Tibial artery (tissue), 4 donors: ENCODE measurements at regions of chr3 and their contacts with region 1.

Region 1: DNA sequence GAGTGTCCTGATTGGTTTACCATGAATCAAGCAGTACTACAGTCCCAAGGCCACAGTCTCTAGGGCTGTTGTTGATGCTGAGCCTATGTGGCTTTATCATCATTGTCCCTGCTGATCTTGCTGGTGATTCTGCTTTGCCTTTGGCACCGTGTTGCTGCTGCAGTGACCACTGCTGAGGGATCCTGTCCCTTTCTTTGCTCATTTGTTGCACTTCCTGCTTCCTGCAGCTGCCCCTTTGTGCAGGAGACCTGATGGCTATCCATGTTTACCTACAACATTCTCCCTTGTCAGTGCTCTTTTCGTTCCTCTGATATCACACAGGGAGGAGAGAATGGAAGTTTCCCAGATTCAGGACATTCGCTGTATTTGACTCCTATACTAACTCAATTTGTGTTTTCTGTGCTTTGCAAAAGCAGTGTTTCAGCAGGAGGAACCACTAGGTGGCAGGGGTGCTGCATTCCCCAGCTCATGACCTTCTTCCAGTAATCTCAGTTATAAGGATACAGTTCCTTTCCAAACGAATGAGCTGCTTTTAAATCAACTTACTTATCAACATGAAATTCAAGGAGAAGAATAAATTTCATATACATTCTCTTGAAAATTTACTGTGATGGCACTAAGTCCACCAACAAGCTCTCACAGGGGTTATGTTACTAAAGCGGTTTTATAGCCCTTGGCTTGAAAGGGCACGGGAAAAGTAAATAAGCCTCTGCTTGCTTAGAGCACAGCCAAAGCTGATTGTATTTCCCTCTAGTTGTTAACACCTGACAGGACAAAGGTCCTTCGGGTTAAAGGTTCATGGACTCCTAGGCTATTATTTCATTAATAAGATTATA is 9.7 kb upstream of the THUMPD3 start:
- DNase-seq: peak; percentile 57 to 73
- H3K4me3 ChIP-seq: no peak overlapping the region
- H3K27ac ChIP-seq: no peak overlapping the region
- H3K4me1 ChIP-seq: peaks cover 0 to 12% (median 0%) of the 10 kb centered on the region in 4 donors
- H3K27me3 ChIP-seq: no peaks in the 10 kb centered on the region
- CTCF ChIP-seq: peak; percentile 71 to 84

Region 2: DNA sequence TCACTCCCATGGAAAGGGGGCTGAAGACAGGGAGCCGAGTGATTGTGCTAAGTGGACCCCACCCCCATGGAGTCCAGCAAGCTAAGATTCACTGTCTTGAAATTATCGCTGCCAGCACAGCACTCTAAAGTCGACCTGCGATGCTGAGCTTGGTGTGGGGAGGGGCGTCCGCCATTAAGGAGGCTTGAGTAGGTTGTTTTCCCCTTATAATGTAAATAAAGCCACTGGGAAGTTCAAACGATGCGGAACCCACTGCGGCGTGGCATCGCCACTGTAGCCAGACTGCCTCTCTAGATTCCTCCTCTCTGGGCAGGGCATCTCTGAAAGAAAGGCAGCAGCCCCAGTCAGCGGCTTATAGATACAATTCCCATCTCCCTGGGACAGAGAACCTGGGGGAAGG is 92.8 kb before region 1 on chr3:
- intact Hi-C with region 1: no loop called
- DNase-seq: no peak
- H3K4me3 ChIP-seq: no peak overlapping the region
- H3K27ac ChIP-seq: no peak overlapping the region
- H3K4me1 ChIP-seq: no peaks in the 10 kb centered on the region
- H3K27me3 ChIP-seq: no peaks in the 10 kb centered on the region
- CTCF ChIP-seq: no peak

Region 3: DNA sequence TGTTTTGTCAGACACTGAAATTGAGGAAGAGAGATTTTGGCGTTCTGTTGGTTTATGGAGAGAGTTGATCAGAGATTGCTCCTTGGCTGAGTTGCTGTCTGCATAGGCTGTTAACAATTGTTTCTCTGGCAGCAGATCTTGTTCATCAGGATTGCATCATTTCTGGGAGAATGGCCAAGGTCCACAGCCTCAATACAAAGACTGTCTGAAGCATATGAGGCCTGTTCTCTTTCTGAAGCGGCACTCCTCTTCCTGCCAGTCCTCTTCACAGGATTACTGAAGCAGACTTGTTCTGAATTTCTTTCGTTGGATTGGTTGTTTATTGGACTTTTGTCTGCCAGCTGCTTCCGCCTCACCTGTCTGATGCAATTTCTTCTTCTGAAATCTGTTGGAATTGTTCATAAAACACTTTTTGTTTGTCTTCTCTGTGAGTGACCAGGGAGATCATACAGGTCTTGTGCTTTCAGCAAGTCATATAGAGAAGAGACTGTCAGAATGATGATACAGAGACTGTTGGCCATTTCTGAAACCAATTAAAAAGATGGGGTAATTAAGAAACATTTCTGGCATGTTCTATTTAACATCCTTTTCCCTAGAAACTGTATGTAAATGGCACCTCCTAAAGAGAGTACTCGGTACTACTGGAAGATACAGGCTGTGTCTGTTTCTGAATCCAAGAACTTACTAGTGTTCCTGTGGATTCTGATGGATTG is 69.7 kb after region 1 on chr3:
- intact Hi-C with region 1: loop called (anchors 10 kb)
- DNase-seq: peak; percentile 86 to 90
- H3K4me3 ChIP-seq: no peak overlapping the region
- H3K27ac ChIP-seq: peak overlapping the region; percentile 49 to 57
- H3K4me1 ChIP-seq: peaks cover 0 to 73% (median 31%) of the 10 kb centered on the region in 4 donors
- H3K27me3 ChIP-seq: no peaks in the 10 kb centered on the region
- CTCF ChIP-seq: peak; percentile 55 to 58

Region 4: DNA sequence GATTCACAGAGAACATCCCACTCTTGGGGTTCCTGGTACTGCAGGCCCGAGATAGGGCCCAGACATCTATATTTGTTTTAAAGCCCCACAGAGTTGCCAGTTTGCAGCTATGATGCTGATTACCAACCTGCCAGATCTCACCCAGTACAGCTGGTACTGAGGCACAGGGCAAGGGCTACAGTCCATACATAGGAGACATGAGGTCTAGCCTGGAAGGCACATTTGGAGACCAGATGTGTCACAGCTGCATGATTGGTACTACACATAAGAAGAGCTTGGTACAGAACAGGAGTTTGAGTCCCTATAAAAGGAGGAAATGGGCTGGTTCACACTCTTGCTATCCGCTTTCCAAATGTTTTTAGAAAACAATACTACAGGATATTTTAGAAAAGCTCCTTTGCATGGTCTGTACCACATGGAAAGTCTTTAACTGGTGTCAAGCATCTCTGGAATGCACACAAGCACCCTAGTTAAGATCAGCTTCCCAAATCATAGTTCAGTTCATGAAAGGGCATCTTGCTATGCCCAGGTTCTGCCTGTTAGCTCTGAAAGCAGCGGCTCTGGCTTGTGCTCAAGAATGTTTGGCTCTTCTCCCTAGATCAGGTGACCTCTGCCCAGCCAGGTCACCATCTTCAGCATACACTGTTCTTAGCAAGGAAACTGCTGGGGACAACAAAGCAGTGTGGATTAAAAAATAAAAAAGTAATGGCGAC is 316.7 kb after region 1 on chr3:
- intact Hi-C with region 1: loop called (anchors 10 kb)
- DNase-seq: no peak
- H3K4me3 ChIP-seq: no peak overlapping the region
- H3K27ac ChIP-seq: peak overlapping the region in 1 of 2 donors; percentile 14
- H3K4me1 ChIP-seq: peaks cover 0 to 17% (median 15%) of the 10 kb centered on the region in 4 donors
- H3K27me3 ChIP-seq: no peaks in the 10 kb centered on the region
- CTCF ChIP-seq: no peak